Calu3 (cell line): ENCODE measurements at regions of chr3 and their contacts with region 1.

Region 1: GRCh38 chr3:150408221-150409102 is at the start of gene TSC22D2:
- DNase-seq: peak; percentile 100
- H3K4me3 Mint-ChIP-seq: peak within 1 kb of the TSS; percentile 74
- H3K27ac Mint-ChIP-seq: peak within 1 kb of the TSS; percentile 99
- H3K4me1 Mint-ChIP-seq: peaks cover 21% of the 10 kb centered on the region
- H3K27me3 Mint-ChIP-seq: no peaks in the 10 kb centered on the region
- CTCF ChIP-seq: no peak
- total RNA-seq, gene TSC22D2: 40.9 and 49.7 TPM in 2 replicates

Region 2: GRCh38 chr3:149898771-149899170 is 509.7 kb before region 1 on chr3:
- CTCF ChIA-PET with region 1: no interaction called
- intact Hi-C with region 1: loop called (anchors 10 kb)
- DNase-seq: peak; percentile 12
- H3K4me3 Mint-ChIP-seq: no peak overlapping the region
- H3K27ac Mint-ChIP-seq: peak overlapping the region; percentile 17
- H3K4me1 Mint-ChIP-seq: peaks cover 43% of the 10 kb centered on the region
- H3K27me3 Mint-ChIP-seq: no peaks in the 10 kb centered on the region
- CTCF ChIP-seq: no peak

Region 3: GRCh38 chr3:150174180-150174579 is 234.3 kb before region 1 on chr3:
- CTCF ChIA-PET with region 1: no interaction called
- intact Hi-C with region 1: no loop called
- DNase-seq: no peak
- H3K4me3 Mint-ChIP-seq: no peak overlapping the region
- H3K27ac Mint-ChIP-seq: no peak overlapping the region
- H3K4me1 Mint-ChIP-seq: peaks cover 2% of the 10 kb centered on the region
- H3K27me3 Mint-ChIP-seq: peaks cover 25% of the 10 kb centered on the region
- CTCF ChIP-seq: no peak

Region 4: GRCh38 chr3:150184426-150185071 is 223.9 kb before region 1 on chr3:
- CTCF ChIA-PET with region 1: no interaction called
- intact Hi-C with region 1: no loop called
- DNase-seq: no peak
- H3K4me3 Mint-ChIP-seq: no peak overlapping the region
- H3K27ac Mint-ChIP-seq: no peak overlapping the region
- H3K4me1 Mint-ChIP-seq: peaks cover 12% of the 10 kb centered on the region
- H3K27me3 Mint-ChIP-seq: no peaks in the 10 kb centered on the region
- CTCF ChIP-seq: no peak

Region 5: DNA sequence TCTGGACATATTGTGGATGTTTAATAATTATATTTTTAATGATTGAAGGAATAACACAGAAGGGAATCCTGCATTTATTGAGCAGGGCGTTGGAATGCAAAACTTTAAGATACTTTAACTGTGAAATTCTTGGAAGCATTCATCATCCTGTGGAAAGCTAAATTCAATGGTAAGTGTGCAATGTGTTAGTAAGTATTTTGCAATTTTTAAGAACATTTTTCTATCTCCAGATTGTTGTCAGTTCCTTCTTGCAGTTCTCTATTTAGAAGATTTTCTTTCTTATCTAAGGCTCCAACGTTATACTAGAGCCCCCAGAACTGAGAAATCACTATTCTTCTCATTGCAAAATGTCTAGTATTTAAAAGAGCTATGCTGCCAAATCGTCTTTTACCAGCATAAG is 132.5 kb before region 1 on chr3:
- CTCF ChIA-PET with region 1: no interaction called
- intact Hi-C with region 1: no loop called
- DNase-seq: no peak
- H3K4me3 Mint-ChIP-seq: no peak overlapping the region
- H3K27ac Mint-ChIP-seq: no peak overlapping the region
- H3K4me1 Mint-ChIP-seq: no peaks in the 10 kb centered on the region
- H3K27me3 Mint-ChIP-seq: no peaks in the 10 kb centered on the region
- CTCF ChIP-seq: no peak

Region 6: GRCh38 chr3:150286390-150287147 is 121.9 kb before region 1 on chr3:
- CTCF ChIA-PET with region 1: interaction called, 11 read pairs
- intact Hi-C with region 1: loop called (anchors 1 kb)
- DNase-seq: peak; percentile 45
- H3K4me3 Mint-ChIP-seq: no peak overlapping the region
- H3K27ac Mint-ChIP-seq: no peak overlapping the region
- H3K4me1 Mint-ChIP-seq: peaks cover 7% of the 10 kb centered on the region
- H3K27me3 Mint-ChIP-seq: no peaks in the 10 kb centered on the region
- CTCF ChIP-seq: peak; percentile 69

Region 7: GRCh38 chr3:150348500-150348899 is 60.0 kb before region 1 on chr3:
- CTCF ChIA-PET with region 1: interaction called, 5 read pairs
- intact Hi-C with region 1: loop called (anchors 1 kb)
- DNase-seq: peak; percentile 80
- H3K4me3 Mint-ChIP-seq: peak overlapping the region; percentile 36
- H3K27ac Mint-ChIP-seq: peak overlapping the region; percentile 77
- H3K4me1 Mint-ChIP-seq: peaks cover 66% of the 10 kb centered on the region
- H3K27me3 Mint-ChIP-seq: no peaks in the 10 kb centered on the region
- CTCF ChIP-seq: no peak

Region 8: DNA sequence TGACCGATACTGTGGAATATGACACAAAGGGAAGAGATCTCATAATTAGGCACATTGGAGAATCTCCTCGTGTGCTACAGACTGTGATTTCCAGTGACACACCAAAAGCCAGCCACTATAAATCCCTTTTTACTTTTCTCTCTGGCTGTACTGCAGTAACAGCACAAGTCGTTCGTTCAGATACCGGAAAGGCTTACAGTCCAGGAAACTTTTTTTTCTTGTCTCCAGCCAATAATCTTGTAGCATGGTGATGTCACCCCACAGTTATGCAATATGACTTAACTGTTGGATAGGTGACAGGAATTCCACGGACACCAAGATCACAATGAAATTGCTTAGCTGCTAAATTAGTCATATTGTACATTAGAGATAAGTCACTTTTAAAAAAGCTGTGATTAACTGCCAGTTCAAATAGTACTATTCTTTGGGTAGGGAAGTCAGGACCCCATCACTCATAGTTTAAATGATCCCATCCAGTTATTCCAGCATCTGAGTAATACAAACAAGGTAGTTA is 36.7 kb before region 1 on chr3:
- CTCF ChIA-PET with region 1: interaction called, 4 read pairs
- intact Hi-C with region 1: loop called (anchors 1 kb)
- DNase-seq: peak; percentile 91
- H3K4me3 Mint-ChIP-seq: peak overlapping the region; percentile 62
- H3K27ac Mint-ChIP-seq: peak overlapping the region; percentile 94
- H3K4me1 Mint-ChIP-seq: peaks cover 63% of the 10 kb centered on the region
- H3K27me3 Mint-ChIP-seq: no peaks in the 10 kb centered on the region
- CTCF ChIP-seq: no peak

Region 9: DNA sequence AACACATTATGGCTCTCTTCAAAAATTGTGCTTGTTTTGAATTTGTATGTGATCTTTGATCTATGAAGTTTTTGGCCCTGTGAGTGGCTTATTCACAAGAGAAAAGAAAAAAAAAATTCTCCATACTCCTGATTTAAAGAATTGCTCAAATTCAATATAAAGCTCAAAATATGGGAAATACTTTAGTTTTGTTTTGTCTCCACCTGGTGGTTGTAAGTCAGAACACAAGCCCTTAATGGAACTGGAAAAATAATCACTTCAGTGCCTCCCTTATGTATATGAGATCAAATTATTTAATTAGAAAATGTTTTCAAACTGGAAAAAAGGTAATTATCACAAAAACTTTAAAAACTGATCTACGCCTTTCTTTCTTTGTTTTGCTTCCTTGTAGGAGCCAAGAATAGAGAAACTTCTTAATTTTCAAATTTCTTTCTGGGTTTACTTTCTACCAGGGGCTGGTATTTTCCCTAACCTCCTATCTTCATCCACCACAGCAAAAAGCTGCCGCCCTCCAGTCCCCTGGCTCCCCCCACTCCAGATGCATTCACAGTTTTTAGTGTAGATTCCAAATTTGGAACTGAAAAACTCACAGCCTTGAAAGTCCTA is 87.2 kb after region 1 on chr3:
- CTCF ChIA-PET with region 1: interaction called, 34 read pairs
- intact Hi-C with region 1: no loop called
- DNase-seq: peak; percentile 49
- H3K4me3 Mint-ChIP-seq: no peak overlapping the region
- H3K27ac Mint-ChIP-seq: peak overlapping the region; percentile 20
- H3K4me1 Mint-ChIP-seq: peaks cover 31% of the 10 kb centered on the region
- H3K27me3 Mint-ChIP-seq: no peaks in the 10 kb centered on the region
- CTCF ChIP-seq: peak; percentile 64

Region 10: GRCh38 chr3:150515210-150515609 is 106.7 kb after region 1 on chr3:
- CTCF ChIA-PET with region 1: no interaction called
- intact Hi-C with region 1: no loop called
- DNase-seq: no peak
- H3K4me3 Mint-ChIP-seq: no peak overlapping the region
- H3K27ac Mint-ChIP-seq: peak overlapping the region; percentile 3
- H3K4me1 Mint-ChIP-seq: no peaks in the 10 kb centered on the region
- H3K27me3 Mint-ChIP-seq: no peaks in the 10 kb centered on the region
- CTCF ChIP-seq: no peak